ENCODE measurements at regions of chr16 and their contacts with region 1.

Region 1: DNA sequence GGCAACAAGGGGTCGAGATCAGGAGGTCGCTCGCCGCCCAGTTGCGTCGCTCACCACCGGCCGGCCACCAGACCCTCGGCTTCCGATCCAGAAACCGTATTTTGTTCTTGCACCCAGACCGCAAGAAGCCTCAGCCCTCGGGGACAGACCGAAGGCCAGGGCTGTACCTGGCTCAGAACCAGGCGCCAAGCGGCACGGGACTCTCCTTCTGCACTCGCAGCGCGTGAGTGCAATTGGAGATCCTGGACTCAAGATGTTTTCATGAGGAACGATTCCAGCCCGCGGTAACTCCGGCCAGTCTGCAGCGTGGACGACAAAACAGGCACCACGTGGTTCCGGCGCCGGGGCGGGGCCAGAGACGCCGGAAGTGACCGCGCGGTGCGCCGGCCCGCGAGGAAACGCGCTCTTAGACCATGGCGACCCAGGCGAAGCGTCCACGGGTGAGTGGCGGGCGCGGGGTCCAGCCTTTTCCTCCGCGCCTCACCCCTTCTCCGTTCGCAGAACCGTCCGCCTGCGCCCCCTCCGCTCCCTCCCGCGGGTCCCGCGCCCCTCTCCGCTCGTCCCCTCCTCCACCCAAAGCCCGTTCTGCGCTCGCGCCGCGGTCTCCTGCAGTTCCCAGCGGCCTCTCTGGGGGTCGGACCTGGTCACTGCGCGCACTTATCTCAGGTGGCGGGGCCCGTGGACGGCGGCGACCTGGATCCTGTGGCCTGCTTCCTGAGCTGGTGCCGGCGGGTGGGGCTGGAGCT is at the start of gene SETD6:
- DNase-seq: peak; percentile 87
- ATAC-seq: peak; percentile 72
- H3K4me3 Mint-ChIP-seq: peak within 1 kb of the TSS; percentile 92
- H3K27ac Mint-ChIP-seq: peak within 1 kb of the TSS; percentile 86
- H3K4me1 Mint-ChIP-seq: peaks cover 49% of the 10 kb centered on the region
- H3K27me3 Mint-ChIP-seq: no peaks in the 10 kb centered on the region
- total RNA-seq, gene SETD6: 13.8 to 15.1 TPM

Region 2: DNA sequence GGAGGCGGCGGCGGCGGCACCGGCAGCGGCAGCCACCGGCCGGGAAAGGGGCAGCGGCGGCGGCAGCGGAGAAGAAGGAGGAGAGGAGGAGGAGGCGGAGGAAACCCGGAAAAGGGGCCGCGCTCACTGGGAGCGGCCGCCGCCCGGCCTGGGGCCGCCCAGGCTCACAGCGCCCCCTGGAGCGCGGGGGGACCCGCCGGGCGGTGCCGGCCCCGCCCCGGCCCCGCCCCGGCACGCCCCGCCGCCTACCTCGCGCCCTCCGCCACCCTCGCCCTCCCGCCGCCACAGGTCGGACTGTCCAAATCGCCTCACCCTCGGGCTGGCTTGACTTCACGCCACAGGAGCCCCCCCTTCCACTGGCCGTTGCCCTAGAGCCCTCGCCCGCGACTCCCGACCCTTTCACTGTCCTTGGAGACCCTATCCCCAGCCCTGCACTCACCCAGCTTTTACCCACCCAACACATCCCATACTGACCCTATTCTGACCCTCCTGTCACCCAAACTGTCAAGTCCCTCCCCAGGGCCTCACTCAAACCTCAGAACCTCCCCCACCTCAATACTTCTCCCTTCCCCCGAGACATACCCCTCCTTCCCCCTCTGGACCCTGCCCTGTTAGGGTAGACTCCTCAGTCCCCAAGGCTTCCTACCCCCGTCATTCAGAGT is 317.1 kb before region 1 on chr16 and contains the start of gene CSNK2A2:
- CTCF ChIA-PET with region 1: no interaction called
- POLR2A ChIA-PET with region 1: no interaction called
- intact Hi-C with region 1: loop called in 1 of 2 experiments (anchors 10 kb)
- DNase-seq: peak; percentile 84
- ATAC-seq: peak; percentile 94
- H3K4me3 Mint-ChIP-seq: peak within 1 kb of the TSS; percentile 84
- H3K27ac Mint-ChIP-seq: peak within 1 kb of the TSS; percentile 74
- H3K4me1 Mint-ChIP-seq: peaks cover 34% of the 10 kb centered on the region
- H3K27me3 Mint-ChIP-seq: peaks cover 6% of the 10 kb centered on the region
- total RNA-seq, gene CSNK2A2: 85.9 to 92.2 TPM

Region 3: DNA sequence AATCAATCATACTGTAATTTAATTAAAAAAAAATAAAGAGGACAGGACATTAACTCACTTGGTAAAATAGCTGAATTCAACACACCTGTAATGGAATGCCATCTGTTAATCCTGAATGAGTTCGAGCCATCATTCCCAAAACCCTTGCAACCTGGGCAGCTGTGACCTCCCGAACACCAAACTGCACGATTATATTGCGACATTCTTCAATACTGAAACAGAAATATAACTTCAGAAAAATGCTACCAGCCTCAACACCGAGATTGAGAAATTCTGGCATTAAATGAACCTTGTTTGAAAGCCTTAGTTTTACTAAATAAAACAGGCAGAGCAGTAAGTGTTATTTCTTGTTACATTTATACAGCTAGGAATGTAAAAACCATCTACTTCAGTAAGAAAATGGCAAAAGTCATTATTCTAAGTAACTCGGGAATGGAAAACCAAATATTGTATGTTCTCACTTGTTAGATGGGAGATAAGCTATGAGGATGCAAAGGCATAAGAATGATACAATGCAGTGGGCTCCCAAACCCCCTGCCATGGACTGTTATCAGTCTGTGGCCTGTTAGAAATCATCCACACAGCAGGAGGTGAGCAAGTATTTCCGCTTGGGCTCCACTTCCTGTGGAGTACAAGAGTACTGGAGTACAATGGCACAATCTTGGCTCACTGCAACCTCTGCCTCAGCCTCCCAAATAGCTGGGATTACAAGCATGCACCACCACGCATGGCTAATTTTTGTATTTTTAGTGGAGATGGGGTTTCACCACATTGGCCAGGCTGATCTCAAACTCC is 67.9 kb after region 1 on chr16:
- CTCF ChIA-PET with region 1: interaction called, 4 read pairs
- POLR2A ChIA-PET with region 1: no interaction called
- intact Hi-C with region 1: loop called (anchors 5 kb)
- DNase-seq: peak; percentile 42
- ATAC-seq: peak; percentile 44
- H3K4me3 Mint-ChIP-seq: no peak overlapping the region
- H3K27ac Mint-ChIP-seq: no peak overlapping the region
- H3K4me1 Mint-ChIP-seq: peaks cover 12% of the 10 kb centered on the region
- H3K27me3 Mint-ChIP-seq: no peaks in the 10 kb centered on the region

Region 4: GRCh38 chr16:58629572-58630104 is 114.3 kb after region 1 on chr16 and contains the start of gene CNOT1:
- CTCF ChIA-PET with region 1: no interaction called
- POLR2A ChIA-PET with region 1: interaction called, 3 read pairs
- intact Hi-C with region 1: loop called (anchors 1 kb)
- DNase-seq: peak; percentile 99
- ATAC-seq: peak; percentile 89
- H3K4me3 Mint-ChIP-seq: peak within 1 kb of the TSS; percentile 100
- H3K27ac Mint-ChIP-seq: peak within 1 kb of the TSS; percentile 100
- H3K4me1 Mint-ChIP-seq: peaks cover 27% of the 10 kb centered on the region
- H3K27me3 Mint-ChIP-seq: no peaks in the 10 kb centered on the region
- total RNA-seq, gene CNOT1: 265 to 348 TPM

Region 5: GRCh38 chr16:58684354-58685083 is 169.2 kb after region 1 on chr16 and contains the start of gene SLC38A7:
- CTCF ChIA-PET with region 1: interaction called, 6 read pairs
- POLR2A ChIA-PET with region 1: no interaction called
- intact Hi-C with region 1: loop called in 1 of 2 experiments (anchors 5 kb)
- DNase-seq: peak; percentile 88
- ATAC-seq: peak; percentile 93
- H3K4me3 Mint-ChIP-seq: peak within 1 kb of the TSS; percentile 86
- H3K27ac Mint-ChIP-seq: peak within 1 kb of the TSS; percentile 74
- H3K4me1 Mint-ChIP-seq: peaks cover 19% of the 10 kb centered on the region
- H3K27me3 Mint-ChIP-seq: no peaks in the 10 kb centered on the region
- total RNA-seq, gene SLC38A7: 4.5 to 6.5 TPM

Region 6: GRCh38 chr16:58755989-58756649 is 240.8 kb after region 1 on chr16:
- CTCF ChIA-PET with region 1: interaction called, 20 read pairs
- POLR2A ChIA-PET with region 1: no interaction called
- intact Hi-C with region 1: loop called (anchors 1 kb)
- DNase-seq: peak; percentile 90
- ATAC-seq: peak; percentile 97
- H3K4me3 Mint-ChIP-seq: no peak overlapping the region
- H3K27ac Mint-ChIP-seq: no peak overlapping the region
- H3K4me1 Mint-ChIP-seq: peaks cover 7% of the 10 kb centered on the region
- H3K27me3 Mint-ChIP-seq: no peaks in the 10 kb centered on the region

Measured in activated CD4-positive, alpha-beta T cell treated with anti-CD3 and anti-CD28 coated beads for 36 hours (primary cell).